ENCODE measurements at regions of chr7 and their contacts with region 1.

Region 1: GRCh38 chr7:66654123-66654732 is 25.5 kb downstream of the KCTD7 start:
- DNase-seq: peak; percentile 98 to 99
- H3K4me3 ChIP-seq: peak overlapping the region; percentile 93 to 99
- H3K27ac ChIP-seq: peak overlapping the region; percentile 97 to 100
- H3K4me1 ChIP-seq: peaks cover 0 to 23% (median 9%) of the 10 kb centered on the region in 4 donors
- H3K27me3 ChIP-seq: no peaks in the 10 kb centered on the region
- CTCF ChIP-seq: peak; percentile 20 to 31

Region 2: DNA sequence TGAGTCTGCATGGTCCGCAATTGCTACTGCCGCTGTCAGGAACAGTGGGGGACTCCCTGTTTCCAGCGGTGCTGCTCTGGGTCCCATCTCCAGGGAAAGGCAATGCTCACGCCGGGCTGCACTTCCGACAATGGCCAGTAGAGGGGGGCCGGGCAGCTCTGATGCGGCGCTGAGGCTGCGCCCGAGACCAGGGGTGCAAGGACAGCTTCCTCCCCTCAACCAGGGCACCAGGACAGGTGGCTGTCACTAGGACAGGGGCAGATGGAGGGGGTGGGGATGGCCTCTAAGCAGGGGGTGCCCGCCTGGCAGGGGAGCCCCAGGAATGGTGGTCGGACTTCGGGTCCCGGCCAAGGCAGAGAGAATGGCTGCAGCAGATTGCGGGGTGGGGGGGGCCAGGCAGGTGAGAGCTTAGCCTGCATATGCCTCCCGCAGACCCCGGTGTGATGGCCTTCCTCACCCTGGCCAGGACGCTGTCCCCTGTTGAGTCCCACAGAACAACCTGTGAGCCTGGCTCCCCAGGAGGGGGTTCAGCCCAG is 96.6 kb before region 1 on chr7:
- intact Hi-C with region 1: loop called (anchors 10 kb)
- DNase-seq: peak; percentile 56 to 81
- H3K4me3 ChIP-seq: peak overlapping the region in 1 of 2 donors; percentile 24
- H3K27ac ChIP-seq: no peak overlapping the region
- H3K4me1 ChIP-seq: peaks cover 0 to 30% (median 8%) of the 10 kb centered on the region in 4 donors
- H3K27me3 ChIP-seq: no peaks in the 10 kb centered on the region
- CTCF ChIP-seq: peak; percentile 90 to 98

Region 3: GRCh38 chr7:66815951-66816350 is 161.7 kb after region 1 on chr7:
- intact Hi-C with region 1: no loop called
- DNase-seq: no peak
- H3K4me3 ChIP-seq: no peak overlapping the region
- H3K27ac ChIP-seq: no peak overlapping the region
- H3K4me1 ChIP-seq: no peaks in the 10 kb centered on the region
- H3K27me3 ChIP-seq: no peaks in the 10 kb centered on the region
- CTCF ChIP-seq: no peak